Caco-2 (cell line): ENCODE measurements at regions of chr14 and their contacts with region 1.

Region 1: GRCh38 chr14:40206656-40207055 is 774.4 kb upstream of the FBXO33 start:
- DNase-seq: no peak
- H3K4me3 ChIP-seq: no peak overlapping the region
- H3K4me3 Mint-ChIP-seq: no peak overlapping the region
- H3K27ac Mint-ChIP-seq: no peak overlapping the region
- H3K4me1 ChIP-seq: no peaks in the 10 kb centered on the region
- H3K4me1 Mint-ChIP-seq: no peaks in the 10 kb centered on the region
- H3K27me3 ChIP-seq: no peaks in the 10 kb centered on the region
- H3K27me3 Mint-ChIP-seq: no peaks in the 10 kb centered on the region
- CTCF ChIP-seq: no peak

Region 2: DNA sequence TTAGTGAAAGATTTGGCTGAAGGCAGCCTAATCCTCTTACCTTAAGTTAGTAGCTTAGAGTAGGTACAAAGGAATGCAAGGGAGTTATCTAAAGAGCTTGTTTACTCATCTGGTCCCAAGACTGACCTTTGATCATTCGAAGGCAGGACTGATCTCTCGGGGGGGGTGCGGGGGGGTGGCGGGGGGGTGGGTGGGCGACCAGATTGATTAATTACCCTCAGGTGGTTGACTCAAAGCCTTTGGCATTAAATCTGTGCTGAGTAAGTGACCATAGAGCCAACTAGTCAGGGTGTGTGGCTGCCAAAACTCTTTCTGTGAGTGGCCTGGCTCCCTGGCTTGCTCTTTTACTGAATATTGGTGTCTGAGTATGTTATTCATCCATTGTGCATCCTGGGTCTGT is 42.6 kb before region 1 on chr14:
- CTCF ChIA-PET with region 1: no interaction called
- POLR2A ChIA-PET with region 1: no interaction called
- intact Hi-C with region 1: loop called (anchors 2 kb)
- DNase-seq: peak in 1 of 2 experiments; percentile 2
- H3K4me3 ChIP-seq: no peak overlapping the region
- H3K4me3 Mint-ChIP-seq: peak overlapping the region; percentile 17
- H3K27ac Mint-ChIP-seq: no peak overlapping the region
- H3K4me1 ChIP-seq: peaks cover 6% of the 10 kb centered on the region
- H3K4me1 Mint-ChIP-seq: no peaks in the 10 kb centered on the region
- H3K27me3 ChIP-seq: no peaks in the 10 kb centered on the region
- H3K27me3 Mint-ChIP-seq: no peaks in the 10 kb centered on the region
- CTCF ChIP-seq: no peak